ENCODE measurements at regions of chr3 and their contacts with region 1.

Region 1: DNA sequence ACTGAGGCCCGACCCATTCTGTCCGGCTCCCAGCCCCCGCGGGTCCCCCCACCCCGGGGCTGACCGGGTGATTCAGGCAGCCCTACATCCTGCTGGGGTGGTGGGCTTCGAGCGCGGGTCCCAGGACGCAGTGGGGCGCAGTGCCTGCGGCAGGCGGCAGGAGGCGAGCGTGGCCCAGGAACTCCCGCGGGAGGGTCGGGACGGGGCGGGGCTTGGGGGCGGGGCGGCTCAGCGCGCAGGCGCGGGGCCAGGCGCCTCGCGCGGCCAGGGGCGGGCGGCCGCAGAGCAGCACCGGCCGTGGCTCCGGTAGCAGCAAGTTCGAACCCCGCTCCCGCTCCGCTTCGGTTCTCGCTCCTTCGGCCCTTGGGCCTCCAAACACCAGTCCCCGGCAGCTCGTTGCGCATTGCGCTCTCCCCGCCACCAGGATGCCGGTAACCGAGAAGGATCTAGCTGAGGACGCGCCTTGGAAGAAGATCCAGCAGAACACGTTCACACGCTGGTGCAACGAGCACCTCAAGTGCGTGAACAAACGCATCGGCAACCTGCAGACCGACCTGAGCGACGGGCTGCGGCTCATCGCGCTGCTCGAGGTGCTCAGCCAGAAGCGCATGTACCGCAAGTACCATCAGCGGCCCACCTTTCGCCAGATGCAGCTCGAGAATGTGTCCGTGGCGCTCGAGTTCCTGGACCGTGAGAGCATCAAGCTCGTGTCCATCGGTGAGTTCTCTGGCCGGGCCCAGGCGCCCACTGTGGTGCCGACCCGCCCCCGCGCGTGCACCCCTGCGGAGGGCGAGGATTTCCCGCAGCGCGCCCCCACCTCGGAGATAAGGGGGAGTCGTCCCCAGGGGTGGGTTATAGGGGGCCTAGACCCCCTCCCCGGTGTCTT is at the start of gene FLNB:
- DNase-seq: peak; percentile 88
- H3K4me3 ChIP-seq: peak within 1 kb of the TSS; percentile 68 to 94 (median 84)
- H3K27ac ChIP-seq: peak within 1 kb of the TSS; percentile 86 to 93 (median 88)
- H3K4me1 ChIP-seq: peaks cover 0 to 42% (median 35%) of the 10 kb centered on the region in 4 donors
- H3K27me3 ChIP-seq: no peaks in the 10 kb centered on the region
- CTCF ChIP-seq: peak; percentile 71 to 86 (median 78)
- EP300 ChIP-seq: no peak
- POLR2A ChIP-seq: peak; percentile 56 to 71
- total RNA-seq, gene FLNB: 51.7 to 121 (median 76.7) TPM

Region 2: DNA sequence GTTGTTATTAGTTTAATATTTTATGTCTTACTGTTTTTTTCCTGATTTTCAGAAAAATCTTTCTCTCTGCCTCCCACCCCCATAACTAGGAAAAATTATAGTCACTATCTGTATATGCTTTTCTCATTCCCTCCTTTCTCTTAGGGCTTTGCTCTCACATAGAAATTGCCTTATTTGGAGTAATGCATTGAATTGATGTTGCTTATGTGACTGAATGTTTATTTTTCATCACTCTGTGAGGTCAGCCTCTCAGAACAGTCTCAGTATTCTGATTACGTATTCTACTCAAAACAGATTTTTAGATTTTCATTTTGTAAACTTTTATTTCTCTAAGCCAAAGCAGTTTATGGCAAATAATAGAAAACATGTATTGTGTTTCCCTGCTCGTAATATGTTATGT is 131.3 kb before region 1 on chr3:
- intact Hi-C with region 1: no loop called
- DNase-seq: no peak
- H3K4me3 ChIP-seq: no peak overlapping the region
- H3K27ac ChIP-seq: peak overlapping the region in 1 of 4 donors; percentile 6
- H3K4me1 ChIP-seq: peaks cover 0 to 2% (median under 1%) of the 10 kb centered on the region in 4 donors
- H3K27me3 ChIP-seq: no peaks in the 10 kb centered on the region
- CTCF ChIP-seq: no peak
- EP300 ChIP-seq: no peak
- POLR2A ChIP-seq: no peak

Region 3: DNA sequence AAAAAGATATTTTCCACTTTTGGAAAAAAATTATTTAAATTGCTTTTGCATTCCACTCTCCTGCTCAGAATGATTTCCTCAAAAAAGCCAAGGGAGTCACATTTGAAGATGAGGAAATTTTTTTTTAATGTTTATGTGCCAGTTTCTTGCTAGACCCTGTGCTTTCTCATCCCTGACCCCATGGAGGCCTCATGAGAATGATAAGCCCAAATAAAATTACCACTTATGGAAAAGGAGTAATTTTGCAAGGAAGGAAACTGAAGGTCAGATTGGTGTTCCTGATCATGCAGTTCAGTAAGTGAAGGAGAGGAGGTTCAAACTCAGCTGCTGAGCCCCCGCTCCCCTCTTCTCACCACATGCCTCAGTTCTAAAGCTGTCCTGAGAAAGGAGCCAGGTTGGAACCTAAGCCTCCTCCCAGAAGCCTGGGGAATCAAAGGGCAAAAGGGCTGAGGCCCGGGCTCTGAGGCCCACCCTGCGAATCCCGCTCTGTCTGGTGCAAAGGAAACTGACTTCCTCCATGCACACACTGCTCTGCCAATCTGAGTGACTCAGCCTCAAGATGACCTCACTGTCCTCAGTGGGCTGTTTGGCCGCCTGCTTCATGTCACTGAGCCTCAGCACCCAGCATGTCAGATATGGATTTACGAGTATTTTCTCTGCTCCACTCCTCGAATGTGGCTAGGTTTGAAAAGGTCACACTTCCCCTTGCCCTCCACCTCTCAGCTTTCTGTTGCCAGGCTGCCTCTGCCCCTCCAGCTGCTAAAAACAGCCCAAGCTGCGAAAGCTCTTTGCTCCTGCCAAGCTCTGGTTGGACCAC is 57.1 kb before region 1 on chr3:
- intact Hi-C with region 1: loop called (anchors 5 kb)
- DNase-seq: peak; percentile 93
- H3K4me3 ChIP-seq: no peak overlapping the region
- H3K27ac ChIP-seq: peak overlapping the region; percentile 90 to 98 (median 92)
- H3K4me1 ChIP-seq: peaks cover 0 to 69% (median 62%) of the 10 kb centered on the region in 4 donors
- H3K27me3 ChIP-seq: no peaks in the 10 kb centered on the region
- CTCF ChIP-seq: no peak
- EP300 ChIP-seq: peak; percentile 35 to 93 (median 84)
- POLR2A ChIP-seq: no peak

Region 4: DNA sequence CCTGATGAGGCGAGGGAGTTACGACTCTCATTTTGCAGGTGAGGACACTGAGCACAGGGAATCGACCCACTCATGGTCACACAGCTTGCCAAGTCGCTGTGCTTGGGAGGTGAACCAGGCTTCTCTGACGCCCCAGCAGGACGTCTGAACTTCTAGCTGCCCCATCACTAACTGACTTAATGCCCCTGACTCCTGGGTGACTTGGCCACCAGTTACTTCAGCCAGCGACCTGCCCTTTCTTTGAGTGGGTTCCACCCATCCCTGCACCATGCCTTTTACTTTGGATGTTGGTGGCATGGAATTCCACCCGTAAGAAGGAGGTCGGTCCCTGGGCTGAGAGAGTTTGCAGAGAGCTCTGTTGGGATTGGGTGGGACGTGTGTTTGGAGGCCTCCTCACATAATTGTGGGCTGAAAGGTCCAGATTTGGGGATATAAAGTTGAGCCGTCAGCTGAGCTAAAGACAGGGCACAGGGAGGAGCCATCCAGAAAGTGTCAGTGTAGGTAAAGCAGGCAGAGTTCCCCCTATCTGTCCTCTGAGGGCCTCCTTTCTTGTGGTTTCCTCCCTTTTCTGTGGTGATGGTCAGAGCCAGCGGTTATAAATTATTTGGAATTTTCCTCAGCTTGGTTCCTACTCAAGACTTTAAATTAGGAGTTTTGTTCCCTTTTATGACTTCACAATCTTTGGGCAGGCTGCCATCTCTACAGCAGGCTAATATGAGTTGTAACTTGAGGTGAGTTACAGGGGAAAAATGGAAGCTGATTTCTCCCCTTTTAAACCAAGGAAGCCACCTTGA is 54.8 kb after region 1 on chr3:
- intact Hi-C with region 1: no loop called
- DNase-seq: peak; percentile 89
- H3K4me3 ChIP-seq: no peak overlapping the region
- H3K27ac ChIP-seq: peak overlapping the region; percentile 81 to 93 (median 82)
- H3K4me1 ChIP-seq: peaks cover 0 to 95% (median 95%) of the 10 kb centered on the region in 4 donors
- H3K27me3 ChIP-seq: no peaks in the 10 kb centered on the region
- CTCF ChIP-seq: no peak
- EP300 ChIP-seq: no peak
- POLR2A ChIP-seq: no peak

Region 5: DNA sequence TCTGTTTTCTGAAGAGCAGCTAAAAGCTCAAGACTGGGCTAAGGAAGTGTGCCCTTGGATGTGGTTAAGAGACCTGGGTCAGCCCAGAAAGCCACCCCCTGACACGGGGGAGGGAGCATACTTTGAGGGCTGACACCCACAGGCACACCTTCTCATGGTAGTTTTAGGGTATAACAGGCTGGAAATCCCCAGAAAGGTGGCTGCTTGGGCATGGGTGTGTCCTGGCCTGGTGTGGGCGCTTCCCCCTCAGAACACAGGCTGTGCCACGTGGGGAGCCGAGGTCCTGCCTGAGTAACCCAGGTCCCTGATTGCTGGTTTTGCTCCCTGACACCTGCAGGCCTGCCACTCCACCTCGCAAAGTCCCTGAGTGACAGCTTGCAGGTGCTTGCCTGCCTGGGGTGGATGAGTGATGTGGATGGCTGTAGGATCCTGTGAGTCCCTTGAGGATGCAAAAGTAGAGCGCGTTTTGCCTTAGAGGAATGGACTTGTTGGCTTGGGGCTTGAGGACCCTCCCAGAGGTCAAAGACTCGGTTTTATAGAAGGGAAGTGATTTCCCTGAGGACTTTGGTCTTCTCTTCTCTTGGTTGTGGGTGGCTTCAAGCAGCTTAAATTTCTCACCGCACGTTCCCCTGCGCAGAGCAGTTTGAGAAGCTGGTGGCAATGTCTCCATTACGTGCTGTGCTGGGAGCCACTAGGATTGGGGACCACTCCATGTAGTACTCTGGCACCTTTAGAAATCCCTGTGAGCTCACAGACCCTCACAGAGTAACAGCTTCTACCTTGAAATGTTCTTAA is 108.0 kb after region 1 on chr3:
- intact Hi-C with region 1: loop called (anchors 5 kb)
- DNase-seq: no peak
- H3K4me3 ChIP-seq: no peak overlapping the region
- H3K27ac ChIP-seq: peak overlapping the region; percentile 45 to 81 (median 76)
- H3K4me1 ChIP-seq: peaks cover 0 to 55% (median 49%) of the 10 kb centered on the region in 4 donors
- H3K27me3 ChIP-seq: no peaks in the 10 kb centered on the region
- CTCF ChIP-seq: no peak
- EP300 ChIP-seq: no peak
- POLR2A ChIP-seq: no peak

Region 6: GRCh38 chr3:58177747-58178527 is 169.6 kb after region 1 on chr3:
- intact Hi-C with region 1: loop called (anchors 2 kb)
- DNase-seq: peak; percentile 95
- H3K4me3 ChIP-seq: peak overlapping the region; percentile 32 to 52 (median 46)
- H3K27ac ChIP-seq: peak overlapping the region in 2 of 4 donors; percentile 5 to 61
- H3K4me1 ChIP-seq: peaks cover 0 to 46% (median 39%) of the 10 kb centered on the region in 4 donors
- H3K27me3 ChIP-seq: no peaks in the 10 kb centered on the region
- CTCF ChIP-seq: peak; percentile 87 to 94 (median 91)
- EP300 ChIP-seq: no peak
- POLR2A ChIP-seq: no peak

Region 7: GRCh38 chr3:58305882-58306711 is 297.7 kb after region 1 on chr3 and contains the starts of genes HTD2 and RPP14:
- intact Hi-C with region 1: loop called (anchors 5 kb)
- DNase-seq: peak; percentile 99
- H3K4me3 ChIP-seq: peak within 1 kb of the TSS; percentile 65 to 96 (median 77)
- H3K27ac ChIP-seq: peak within 1 kb of the TSS; percentile 89 to 98 (median 96)
- H3K4me1 ChIP-seq: peaks cover 0 to 32% (median 30%) of the 10 kb centered on the region in 4 donors
- H3K27me3 ChIP-seq: no peaks in the 10 kb centered on the region
- CTCF ChIP-seq: peak; percentile 90 to 98 (median 92)
- EP300 ChIP-seq: peak in 1 of 4 donors; percentile 31
- POLR2A ChIP-seq: peak; percentile 60 to 62
- total RNA-seq, gene HTD2: 6.9 to 20.8 (median 12.5) TPM
- total RNA-seq, gene RPP14: 10.8 to 16.7 (median 13.8) TPM